ENCODE measurements at regions of chr17 and their contacts with region 1.

Region 1: GRCh38 chr17:2232244-2232638 is 71.3 kb downstream of the SMG6 start:
- DNase-seq: peak; percentile 34
- H3K4me3 ChIP-seq: no peak overlapping the region
- H3K27ac ChIP-seq: peak overlapping the region; percentile 13
- H3K4me1 ChIP-seq: peaks cover 9% of the 10 kb centered on the region
- H3K27me3 ChIP-seq: no peaks in the 10 kb centered on the region
- CTCF ChIP-seq: no peak
- POLR2A ChIP-seq: no peak

Region 2: GRCh38 chr17:2070241-2071023 is 161.8 kb before region 1 on chr17:
- CTCF ChIA-PET with region 1: interaction called, 18 read pairs
- POLR2A ChIA-PET with region 1: no interaction called
- dilution Hi-C with region 1: no loop called
- intact Hi-C with region 1: loop called (anchors 1 kb)
- DNase-seq: no peak
- H3K4me3 ChIP-seq: no peak overlapping the region
- H3K27ac ChIP-seq: peak overlapping the region; percentile 93
- H3K4me1 ChIP-seq: peaks cover 62% of the 10 kb centered on the region
- H3K27me3 ChIP-seq: no peaks in the 10 kb centered on the region
- CTCF ChIP-seq: no peak
- POLR2A ChIP-seq: no peak

Region 3: DNA sequence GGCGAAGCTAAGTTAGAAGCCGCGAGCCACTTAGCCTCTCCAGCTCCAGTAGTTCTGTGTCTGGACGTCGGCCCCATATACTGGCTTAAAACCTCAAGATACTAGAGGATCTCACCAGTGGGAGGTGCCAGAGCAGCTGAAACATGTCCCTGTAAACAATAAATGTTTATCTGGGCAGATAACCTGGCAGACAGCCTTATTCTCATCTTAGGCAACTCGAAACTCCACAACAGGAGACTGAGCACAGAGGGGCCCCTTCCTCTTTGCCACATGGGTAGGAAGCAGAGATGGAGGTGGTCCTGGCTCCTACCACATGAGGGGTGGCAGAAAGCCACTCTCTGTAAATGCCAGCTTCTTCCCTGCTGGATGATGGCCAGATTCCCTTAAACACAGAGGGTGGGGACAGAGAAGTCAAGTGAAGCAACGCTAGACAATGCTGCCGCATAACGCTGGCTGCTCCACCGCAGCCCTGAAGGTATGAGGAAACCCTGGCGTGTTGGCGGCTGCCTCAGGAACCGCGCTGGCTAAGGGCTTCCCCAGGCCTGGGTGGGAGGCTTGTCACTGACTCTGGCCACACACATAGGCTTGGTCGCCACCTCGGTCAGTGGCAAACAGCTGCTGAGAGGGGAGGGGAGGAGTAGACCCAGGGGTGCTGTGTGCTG is 109.5 kb before region 1 on chr17:
- CTCF ChIA-PET with region 1: interaction called, 41 read pairs
- POLR2A ChIA-PET with region 1: no interaction called
- dilution Hi-C with region 1: no loop called
- intact Hi-C with region 1: no loop called
- DNase-seq: peak; percentile 73
- H3K4me3 ChIP-seq: no peak overlapping the region
- H3K27ac ChIP-seq: peak overlapping the region; percentile 0
- H3K4me1 ChIP-seq: peaks cover 24% of the 10 kb centered on the region
- H3K27me3 ChIP-seq: no peaks in the 10 kb centered on the region
- CTCF ChIP-seq: no peak
- POLR2A ChIP-seq: no peak

Region 4: GRCh38 chr17:2179615-2180295 is 52.5 kb before region 1 on chr17:
- CTCF ChIA-PET with region 1: interaction called, 24 read pairs
- POLR2A ChIA-PET with region 1: interaction called, 3 read pairs
- dilution Hi-C with region 1: no loop called
- intact Hi-C with region 1: no loop called
- DNase-seq: peak; percentile 98
- H3K4me3 ChIP-seq: no peak overlapping the region
- H3K27ac ChIP-seq: peak overlapping the region; percentile 94
- H3K4me1 ChIP-seq: peaks cover 75% of the 10 kb centered on the region
- H3K27me3 ChIP-seq: no peaks in the 10 kb centered on the region
- CTCF ChIP-seq: no peak
- POLR2A ChIP-seq: peak; percentile 29

Region 5: DNA sequence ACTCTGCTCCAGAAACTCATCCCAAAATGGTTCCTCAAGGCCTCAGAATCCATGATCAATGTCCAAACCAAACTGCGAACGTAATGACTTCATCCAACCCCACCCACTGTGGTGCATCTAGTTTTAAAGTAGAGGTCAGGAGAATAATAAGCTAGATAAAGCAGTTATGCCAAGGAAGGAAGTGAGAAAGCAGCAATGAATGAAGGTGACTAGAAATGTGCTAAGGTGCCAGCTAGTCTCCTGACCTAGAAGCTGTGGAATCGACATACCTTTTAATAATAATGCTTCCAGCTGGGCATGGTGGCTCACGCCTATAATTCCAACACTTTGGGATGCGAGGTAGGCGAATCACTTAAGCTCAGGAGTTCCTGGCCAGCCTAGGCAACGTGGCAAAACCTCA is 27.8 kb before region 1 on chr17:
- CTCF ChIA-PET with region 1: interaction called, 10 read pairs
- POLR2A ChIA-PET with region 1: no interaction called
- dilution Hi-C with region 1: no loop called
- intact Hi-C with region 1: no loop called
- DNase-seq: peak; percentile 66
- H3K4me3 ChIP-seq: no peak overlapping the region
- H3K27ac ChIP-seq: peak overlapping the region; percentile 70
- H3K4me1 ChIP-seq: peaks cover 21% of the 10 kb centered on the region
- H3K27me3 ChIP-seq: no peaks in the 10 kb centered on the region
- CTCF ChIP-seq: no peak
- POLR2A ChIP-seq: no peak

Region 6: GRCh38 chr17:2279707-2280106 is 47.5 kb after region 1 on chr17:
- CTCF ChIA-PET with region 1: no interaction called
- POLR2A ChIA-PET with region 1: no interaction called
- dilution Hi-C with region 1: no loop called
- intact Hi-C with region 1: no loop called
- DNase-seq: no peak
- H3K4me3 ChIP-seq: no peak overlapping the region
- H3K27ac ChIP-seq: no peak overlapping the region
- H3K4me1 ChIP-seq: no peaks in the 10 kb centered on the region
- H3K27me3 ChIP-seq: no peaks in the 10 kb centered on the region
- CTCF ChIP-seq: no peak
- POLR2A ChIP-seq: no peak